ENCODE measurements at regions of chr4 and their contacts with region 1.

Region 1: GRCh38 chr4:157045507-157046127 is 30.3 kb upstream of the GLRB start:
- DNase-seq: peak; percentile 71
- H3K4me3 ChIP-seq: no peak overlapping the region
- H3K27ac ChIP-seq: no peak overlapping the region
- H3K4me1 ChIP-seq: no peaks in the 10 kb centered on the region
- H3K27me3 ChIP-seq: no peaks in the 10 kb centered on the region
- CTCF ChIP-seq: peak; percentile 72 to 77
- POLR2A ChIP-seq: no peak

Region 2: GRCh38 chr4:156169011-156169410 is 876.6 kb before region 1 on chr4:
- CTCF ChIA-PET with region 1: interaction called, 9 read pairs
- POLR2A ChIA-PET with region 1: no interaction called
- dilution Hi-C with region 1: no loop called
- intact Hi-C with region 1: loop called (anchors 1 kb)
- DNase-seq: peak; percentile 42
- H3K4me3 ChIP-seq: no peak overlapping the region
- H3K27ac ChIP-seq: no peak overlapping the region
- H3K4me1 ChIP-seq: no peaks in the 10 kb centered on the region
- H3K27me3 ChIP-seq: no peaks in the 10 kb centered on the region
- CTCF ChIP-seq: peak; percentile 16 to 45
- POLR2A ChIP-seq: no peak

Region 3: DNA sequence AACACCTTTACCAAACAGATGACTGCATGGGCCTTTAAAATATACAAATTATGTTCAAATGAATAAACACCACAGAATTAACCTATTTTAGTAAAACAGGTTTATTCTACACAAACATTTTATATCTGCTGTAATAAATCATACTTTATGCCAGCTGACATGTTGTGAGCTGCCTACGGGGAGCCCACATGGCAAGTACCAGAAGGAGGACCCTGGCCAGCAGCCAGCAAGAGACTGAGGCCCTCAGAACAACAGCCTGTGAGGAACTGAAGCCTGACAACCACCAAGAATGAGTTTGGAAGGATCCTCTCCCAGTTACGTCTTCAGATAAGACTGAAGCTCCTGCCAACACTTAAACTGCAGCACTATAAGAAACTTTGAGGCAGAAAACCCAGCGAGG is 451.0 kb before region 1 on chr4:
- CTCF ChIA-PET with region 1: interaction called, 3 read pairs
- POLR2A ChIA-PET with region 1: no interaction called
- dilution Hi-C with region 1: no loop called
- intact Hi-C with region 1: loop called (anchors 10 kb)
- DNase-seq: no peak
- H3K4me3 ChIP-seq: no peak overlapping the region
- H3K27ac ChIP-seq: no peak overlapping the region
- H3K4me1 ChIP-seq: peaks cover 12% of the 10 kb centered on the region
- H3K27me3 ChIP-seq: no peaks in the 10 kb centered on the region
- CTCF ChIP-seq: no peak
- POLR2A ChIP-seq: no peak

Region 4: DNA sequence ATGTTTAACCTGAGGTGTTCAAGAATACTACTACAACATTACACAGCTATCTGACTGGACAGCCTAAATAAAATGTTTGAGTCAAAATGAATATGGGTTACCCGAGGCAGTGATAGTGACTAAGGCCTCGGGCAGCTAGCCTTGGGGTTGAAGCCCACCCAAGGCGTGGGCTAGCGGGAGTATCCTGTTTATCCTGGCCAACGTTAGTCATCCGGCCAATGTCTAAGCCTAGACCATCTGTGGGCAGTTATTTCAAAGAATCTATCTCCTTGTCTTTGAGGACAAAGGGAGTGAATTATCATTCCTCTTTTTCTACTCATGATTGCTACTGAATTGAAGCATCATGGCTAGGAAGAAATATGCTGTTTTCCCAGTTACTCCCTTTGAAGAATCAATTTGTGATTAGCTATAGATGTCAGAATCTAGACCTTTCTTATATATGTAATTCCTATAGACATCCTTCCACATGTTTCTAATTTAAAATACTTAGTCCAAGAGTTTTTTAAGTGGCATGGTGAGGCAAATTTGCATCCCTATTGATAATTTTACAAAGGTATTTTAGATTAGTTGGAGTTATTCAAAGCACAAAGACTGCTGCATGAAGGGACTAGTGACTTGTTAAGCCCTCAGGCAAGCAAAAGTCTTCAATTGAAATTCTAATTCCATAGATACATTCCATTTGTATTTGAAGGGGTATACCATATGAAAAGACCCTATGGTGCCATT is 68.0 kb before region 1 on chr4:
- CTCF ChIA-PET with region 1: interaction called, 119 read pairs
- POLR2A ChIA-PET with region 1: no interaction called
- dilution Hi-C with region 1: no loop called
- intact Hi-C with region 1: no loop called
- DNase-seq: no peak
- H3K4me3 ChIP-seq: no peak overlapping the region
- H3K27ac ChIP-seq: no peak overlapping the region
- H3K4me1 ChIP-seq: peaks cover 12% of the 10 kb centered on the region
- H3K27me3 ChIP-seq: no peaks in the 10 kb centered on the region
- CTCF ChIP-seq: no peak
- POLR2A ChIP-seq: no peak

Region 5: GRCh38 chr4:157035471-157035870 is 10.1 kb before region 1 on chr4:
- CTCF ChIA-PET with region 1: interaction called, 28 read pairs
- POLR2A ChIA-PET with region 1: no interaction called
- dilution Hi-C with region 1: no loop called
- intact Hi-C with region 1: no loop called
- DNase-seq: peak; percentile 86
- H3K4me3 ChIP-seq: no peak overlapping the region
- H3K27ac ChIP-seq: no peak overlapping the region
- H3K4me1 ChIP-seq: no peaks in the 10 kb centered on the region
- H3K27me3 ChIP-seq: no peaks in the 10 kb centered on the region
- CTCF ChIP-seq: no peak
- POLR2A ChIP-seq: no peak

Region 6: DNA sequence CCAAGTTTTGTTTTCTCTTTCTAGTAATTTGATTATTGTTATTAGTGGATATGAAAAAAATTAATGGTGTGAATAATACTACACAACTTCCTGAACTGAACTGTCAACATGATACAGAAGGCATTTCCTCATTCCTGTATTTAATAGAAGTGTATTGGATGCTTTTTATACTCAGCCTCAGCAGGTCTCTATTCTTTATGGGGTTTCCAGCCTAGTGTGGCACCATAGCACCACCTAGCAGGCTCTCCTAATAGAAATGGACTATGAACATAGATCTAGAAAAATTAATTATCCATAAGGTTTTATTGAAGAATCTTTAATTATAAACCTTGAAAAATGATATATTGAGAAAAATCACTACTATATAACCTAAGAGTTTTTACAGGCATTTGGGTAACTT is 82.8 kb after region 1 on chr4:
- CTCF ChIA-PET with region 1: interaction called, 14 read pairs
- POLR2A ChIA-PET with region 1: no interaction called
- dilution Hi-C with region 1: no loop called
- intact Hi-C with region 1: loop called (anchors 2 kb)
- DNase-seq: peak; percentile 74
- H3K4me3 ChIP-seq: no peak overlapping the region
- H3K27ac ChIP-seq: no peak overlapping the region
- H3K4me1 ChIP-seq: no peaks in the 10 kb centered on the region
- H3K27me3 ChIP-seq: no peaks in the 10 kb centered on the region
- CTCF ChIP-seq: peak; percentile 20 to 33
- POLR2A ChIP-seq: no peak

Region 7: GRCh38 chr4:157291071-157291470 is 245.5 kb after region 1 on chr4:
- CTCF ChIA-PET with region 1: no interaction called
- POLR2A ChIA-PET with region 1: no interaction called
- dilution Hi-C with region 1: no loop called
- intact Hi-C with region 1: no loop called
- DNase-seq: no peak
- H3K4me3 ChIP-seq: no peak overlapping the region
- H3K27ac ChIP-seq: no peak overlapping the region
- H3K4me1 ChIP-seq: no peaks in the 10 kb centered on the region
- H3K27me3 ChIP-seq: no peaks in the 10 kb centered on the region
- CTCF ChIP-seq: no peak
- POLR2A ChIP-seq: no peak

Region 8: GRCh38 chr4:157722146-157722545 is 676.5 kb after region 1 on chr4:
- CTCF ChIA-PET with region 1: no interaction called
- POLR2A ChIA-PET with region 1: no interaction called
- dilution Hi-C with region 1: no loop called
- intact Hi-C with region 1: no loop called
- DNase-seq: peak; percentile 60
- H3K4me3 ChIP-seq: no peak overlapping the region
- H3K27ac ChIP-seq: no peak overlapping the region
- H3K4me1 ChIP-seq: no peaks in the 10 kb centered on the region
- H3K27me3 ChIP-seq: no peaks in the 10 kb centered on the region
- CTCF ChIP-seq: no peak
- POLR2A ChIP-seq: no peak